ENCODE measurements at regions of chr15 and their contacts with region 1.

Region 1: DNA sequence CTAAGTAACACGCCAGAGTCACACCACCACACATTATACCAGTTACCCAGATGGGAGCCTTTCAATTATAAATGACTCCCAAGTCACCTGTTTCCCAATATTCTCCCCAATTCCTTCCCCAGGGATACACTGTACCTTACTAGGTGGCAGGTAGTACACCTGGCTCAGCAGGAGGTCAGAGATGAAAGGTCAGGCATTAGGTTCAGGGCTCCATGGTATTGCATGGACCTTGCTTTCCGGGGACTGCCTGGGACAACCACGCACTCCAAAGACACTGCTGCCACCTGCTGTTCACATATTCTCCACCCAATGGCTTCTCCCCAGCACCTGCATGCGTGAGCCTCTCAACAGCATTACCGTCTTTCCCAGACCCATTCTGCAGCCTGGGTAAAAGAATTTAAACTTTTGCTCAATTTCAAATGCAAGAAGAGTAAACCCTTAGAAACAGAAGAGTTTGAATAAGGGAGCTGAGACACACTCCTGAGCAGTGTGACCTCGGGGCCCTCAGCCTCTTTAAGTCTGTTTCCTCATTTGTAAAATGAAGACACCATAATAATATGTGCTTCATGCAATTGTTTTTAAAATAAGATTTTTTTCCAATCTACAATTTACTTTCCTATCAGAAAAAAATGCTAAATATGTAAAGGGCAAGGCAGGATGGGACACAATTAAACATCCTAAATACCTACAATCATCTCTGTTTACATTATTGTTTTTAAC is 28.0 kb upstream of the LACTB start:
- DNase-seq: peak; percentile 73
- H3K4me3 ChIP-seq: no peak overlapping the region
- H3K27ac ChIP-seq: no peak overlapping the region
- H3K4me1 ChIP-seq: peaks cover 22% of the 10 kb centered on the region
- H3K27me3 ChIP-seq: no peaks in the 10 kb centered on the region
- CTCF ChIP-seq: peak; percentile 83 to 84
- POLR2A ChIP-seq: no peak

Region 2: DNA sequence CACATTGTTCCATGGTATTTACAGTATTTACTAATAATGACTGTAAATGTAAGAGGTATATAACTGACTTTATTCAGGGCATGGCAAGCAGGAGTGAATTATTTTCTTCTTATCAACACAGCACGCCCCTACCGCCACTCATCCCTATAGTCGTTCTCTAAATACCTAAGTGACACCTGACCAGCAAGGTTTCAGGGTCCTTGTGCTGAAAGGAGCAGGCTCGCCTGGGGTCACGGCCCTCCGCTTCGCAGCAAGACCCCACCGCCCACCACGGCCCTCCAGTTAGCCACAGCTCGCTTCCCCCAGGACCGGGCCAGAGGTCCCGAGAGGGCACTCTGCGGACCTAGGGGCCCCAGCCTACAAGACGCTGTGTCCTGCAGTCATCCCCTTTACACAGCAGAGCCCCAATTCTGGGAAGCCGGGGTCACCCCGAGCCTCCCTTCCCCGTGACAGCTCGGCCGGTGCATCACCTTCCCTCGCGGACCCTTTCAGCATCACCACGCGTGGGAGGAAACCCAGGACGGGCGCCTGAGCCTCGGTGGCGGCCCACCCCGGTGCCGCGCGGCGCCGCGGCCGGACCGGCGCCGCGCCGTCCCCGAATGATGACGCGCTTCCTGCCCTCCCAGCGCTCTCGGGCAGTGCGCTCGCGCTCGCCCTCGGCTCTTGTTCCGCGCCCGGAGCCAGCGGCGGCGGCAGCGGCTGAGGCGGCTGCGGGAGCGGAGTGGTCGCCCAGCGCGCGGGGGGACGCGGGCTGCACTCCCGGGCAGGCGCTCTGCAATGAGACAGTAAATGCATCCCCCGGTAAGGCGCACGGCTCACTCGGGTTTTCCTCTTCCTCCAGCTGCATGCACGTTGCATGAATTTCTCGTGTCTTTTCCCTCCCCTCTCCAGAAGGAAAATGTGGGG is 703.5 kb before region 1 on chr15:
- CTCF ChIA-PET with region 1: no interaction called
- POLR2A ChIA-PET with region 1: no interaction called
- dilution Hi-C with region 1: no loop called
- intact Hi-C with region 1: loop called (anchors 10 kb)
- DNase-seq: peak; percentile 74
- H3K4me3 ChIP-seq: peak within 1 kb of the TSS; percentile 17 to 96 (median 53)
- H3K27ac ChIP-seq: peak within 1 kb of the TSS; percentile 76
- H3K4me1 ChIP-seq: peaks cover 16% of the 10 kb centered on the region
- H3K27me3 ChIP-seq: peaks cover 12 to 14% of the 10 kb centered on the region in 2 experiments
- CTCF ChIP-seq: no peak
- POLR2A ChIP-seq: peak; percentile 90

Region 3: DNA sequence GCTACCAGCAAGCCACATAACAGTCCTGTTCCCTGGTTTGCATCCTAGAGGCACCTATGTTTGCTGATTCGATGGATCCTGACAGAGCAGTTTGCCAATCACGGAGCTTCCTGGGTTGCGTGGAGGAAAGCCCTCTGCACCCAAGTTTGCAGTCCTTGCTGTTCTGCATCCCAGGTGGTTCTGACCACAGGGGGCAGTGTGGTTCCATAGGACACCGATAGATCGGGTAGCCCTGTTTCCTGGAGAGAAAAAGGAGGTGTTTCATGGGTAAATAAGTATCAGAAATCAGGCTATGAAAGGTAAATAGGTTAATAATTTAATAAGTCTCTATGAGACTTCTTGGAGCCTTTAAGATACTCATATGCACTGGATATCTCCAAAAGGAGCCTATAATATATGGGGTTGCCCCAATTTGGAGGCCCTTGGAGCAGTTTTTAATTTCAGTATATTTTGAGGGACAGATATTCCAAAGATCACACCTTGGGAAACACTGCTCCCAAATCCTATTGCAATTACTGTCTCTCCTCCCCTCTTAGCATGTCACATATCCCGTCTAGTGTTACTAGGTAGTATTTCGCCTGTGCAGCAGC is 245.7 kb before region 1 on chr15:
- CTCF ChIA-PET with region 1: interaction called, 18 read pairs
- POLR2A ChIA-PET with region 1: no interaction called
- dilution Hi-C with region 1: no loop called
- intact Hi-C with region 1: loop called (anchors 1 kb)
- DNase-seq: peak; percentile 65
- H3K4me3 ChIP-seq: no peak overlapping the region
- H3K27ac ChIP-seq: peak overlapping the region; percentile 44
- H3K4me1 ChIP-seq: peaks cover 39% of the 10 kb centered on the region
- H3K27me3 ChIP-seq: no peaks in the 10 kb centered on the region
- CTCF ChIP-seq: peak; percentile 57 to 73
- POLR2A ChIP-seq: no peak

Region 4: GRCh38 chr15:62972814-62973213 is 120.8 kb before region 1 on chr15:
- CTCF ChIA-PET with region 1: no interaction called
- POLR2A ChIA-PET with region 1: no interaction called
- dilution Hi-C with region 1: no loop called
- intact Hi-C with region 1: no loop called
- DNase-seq: peak; percentile 9
- H3K4me3 ChIP-seq: no peak overlapping the region
- H3K27ac ChIP-seq: no peak overlapping the region
- H3K4me1 ChIP-seq: no peaks in the 10 kb centered on the region
- H3K27me3 ChIP-seq: no peaks in the 10 kb centered on the region
- CTCF ChIP-seq: no peak
- POLR2A ChIP-seq: no peak

Region 5: GRCh38 chr15:63122002-63122893 is 28.6 kb after region 1 on chr15:
- CTCF ChIA-PET with region 1: no interaction called
- POLR2A ChIA-PET with region 1: no interaction called
- dilution Hi-C with region 1: no loop called
- intact Hi-C with region 1: loop called (anchors 1 kb)
- DNase-seq: peak; percentile 86
- H3K4me3 ChIP-seq: peak overlapping the region; percentile 88 to 99 (median 88)
- H3K27ac ChIP-seq: peak overlapping the region; percentile 61
- H3K4me1 ChIP-seq: peaks cover 4% of the 10 kb centered on the region
- H3K27me3 ChIP-seq: no peaks in the 10 kb centered on the region
- CTCF ChIP-seq: no peak
- POLR2A ChIP-seq: peak; percentile 24

Region 6: DNA sequence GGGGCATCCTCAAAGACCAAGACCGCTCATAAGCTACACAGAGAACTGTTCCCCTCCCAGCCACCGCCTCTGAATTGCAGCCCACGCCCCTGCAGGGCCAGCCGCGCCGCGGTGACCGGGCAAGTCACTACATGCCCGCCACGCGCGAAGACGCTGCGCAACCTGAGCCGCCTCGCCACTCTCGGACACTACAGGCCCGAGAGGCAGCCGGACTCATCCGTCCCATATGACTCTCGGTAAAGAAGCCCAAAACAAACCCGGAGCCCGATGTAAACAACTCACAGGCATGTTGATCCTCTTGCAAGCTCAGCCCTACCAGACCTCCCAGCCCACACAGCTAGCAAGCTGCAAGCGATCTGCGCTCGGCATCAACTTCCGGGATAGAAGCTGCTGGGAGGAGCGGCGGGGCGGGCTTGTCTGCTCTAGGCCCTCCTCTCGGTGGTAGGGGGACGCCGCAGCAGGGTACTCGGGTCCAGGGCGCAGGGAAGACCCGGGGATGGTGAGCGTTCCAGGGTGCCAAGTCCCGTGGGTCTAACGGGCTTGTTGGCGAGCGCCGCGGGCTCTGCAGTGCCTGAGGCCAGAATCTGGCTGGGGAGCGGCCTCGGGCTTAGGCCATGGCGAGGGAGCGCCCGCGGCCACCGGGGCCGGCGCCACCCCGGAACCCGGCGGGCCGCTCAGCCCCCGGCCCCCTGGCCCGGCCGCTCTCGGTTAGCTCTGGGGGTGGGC is 63.6 kb after region 1 on chr15 and contains the start of gene RPS27L:
- CTCF ChIA-PET with region 1: no interaction called
- POLR2A ChIA-PET with region 1: interaction called, 5 read pairs
- dilution Hi-C with region 1: no loop called
- intact Hi-C with region 1: loop called (anchors 1 kb)
- DNase-seq: peak; percentile 92
- H3K4me3 ChIP-seq: peak within 1 kb of the TSS; percentile 54 to 98 (median 88)
- H3K27ac ChIP-seq: peak within 1 kb of the TSS; percentile 71
- H3K4me1 ChIP-seq: peaks cover 11% of the 10 kb centered on the region
- H3K27me3 ChIP-seq: no peaks in the 10 kb centered on the region
- CTCF ChIP-seq: no peak
- POLR2A ChIP-seq: peak; percentile 99
- total RNA-seq, gene RPS27L: 338 and 345 TPM in 2 replicates

Region 7: GRCh38 chr15:63430766-63431449 is 337.3 kb after region 1 on chr15:
- CTCF ChIA-PET with region 1: no interaction called
- POLR2A ChIA-PET with region 1: no interaction called
- dilution Hi-C with region 1: no loop called
- intact Hi-C with region 1: no loop called
- DNase-seq: no peak
- H3K4me3 ChIP-seq: no peak overlapping the region
- H3K27ac ChIP-seq: no peak overlapping the region
- H3K4me1 ChIP-seq: no peaks in the 10 kb centered on the region
- H3K27me3 ChIP-seq: no peaks in the 10 kb centered on the region
- CTCF ChIP-seq: no peak
- POLR2A ChIP-seq: no peak